BJ (cell line): ENCODE measurements at regions of chr10 and their contacts with region 1.

Region 1: GRCh38 chr10:95430231-95430951 is 130.8 kb downstream of the SORBS1 start:
- DNase-seq: no peak
- H3K4me3 ChIP-seq: no peak overlapping the region
- H3K27me3 ChIP-seq: peaks cover 2% of the 10 kb centered on the region; the same call in 1 of the 2 replicates
- CTCF ChIP-seq: peak; percentile 94

Region 2: GRCh38 chr10:95419399-95419798 is 11.0 kb before region 1 on chr10:
- CTCF ChIA-PET with region 1: interaction called, 17 read pairs
- POLR2A ChIA-PET with region 1: no interaction called
- DNase-seq: no peak
- H3K4me3 ChIP-seq: no peak overlapping the region
- H3K27me3 ChIP-seq: no peaks in the 10 kb centered on the region
- CTCF ChIP-seq: no peak

Region 3: GRCh38 chr10:95440756-95441546 is 10.6 kb after region 1 on chr10:
- CTCF ChIA-PET with region 1: interaction called, 61 read pairs
- POLR2A ChIA-PET with region 1: interaction called, 3 read pairs
- DNase-seq: no peak
- H3K4me3 ChIP-seq: no peak overlapping the region
- H3K27me3 ChIP-seq: no peaks in the 10 kb centered on the region
- CTCF ChIP-seq: no peak

Region 4: DNA sequence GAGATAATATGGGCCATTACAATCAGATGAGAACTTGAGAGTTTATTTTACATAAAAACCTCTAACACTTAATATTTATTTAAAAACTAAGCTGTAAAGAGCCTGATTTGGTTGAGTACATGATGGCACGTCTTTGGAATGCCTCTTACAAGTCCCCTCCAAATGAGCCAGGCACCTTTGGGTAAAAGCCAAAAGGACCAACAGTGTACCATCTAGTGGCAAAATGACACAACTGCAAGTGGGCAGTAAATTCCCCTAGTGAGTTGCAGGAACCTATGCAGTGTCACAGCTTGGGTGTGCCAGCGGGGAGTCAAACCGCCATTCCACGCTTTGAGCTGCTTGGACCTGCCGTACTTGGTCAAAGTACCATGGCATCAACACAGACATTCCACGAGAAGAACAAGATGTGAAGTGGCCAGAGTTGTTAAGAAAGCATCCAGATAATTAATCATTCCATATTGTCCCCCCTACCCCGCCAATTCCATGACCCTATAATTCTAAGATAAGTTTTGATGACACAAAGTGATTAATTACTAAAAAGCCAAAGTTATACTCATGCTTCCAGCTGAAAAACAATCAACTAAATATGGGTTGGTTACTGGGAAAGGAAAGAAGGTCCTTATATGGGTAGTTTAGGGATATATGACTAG is 15.6 kb after region 1 on chr10:
- CTCF ChIA-PET with region 1: interaction called, 61 read pairs
- POLR2A ChIA-PET with region 1: interaction called, 3 read pairs
- DNase-seq: peak; percentile 18
- H3K4me3 ChIP-seq: no peak overlapping the region
- H3K27me3 ChIP-seq: no peaks in the 10 kb centered on the region
- CTCF ChIP-seq: peak; percentile 80